ENCODE measurements at regions of chr16 and their contacts with region 1.

Region 1: DNA sequence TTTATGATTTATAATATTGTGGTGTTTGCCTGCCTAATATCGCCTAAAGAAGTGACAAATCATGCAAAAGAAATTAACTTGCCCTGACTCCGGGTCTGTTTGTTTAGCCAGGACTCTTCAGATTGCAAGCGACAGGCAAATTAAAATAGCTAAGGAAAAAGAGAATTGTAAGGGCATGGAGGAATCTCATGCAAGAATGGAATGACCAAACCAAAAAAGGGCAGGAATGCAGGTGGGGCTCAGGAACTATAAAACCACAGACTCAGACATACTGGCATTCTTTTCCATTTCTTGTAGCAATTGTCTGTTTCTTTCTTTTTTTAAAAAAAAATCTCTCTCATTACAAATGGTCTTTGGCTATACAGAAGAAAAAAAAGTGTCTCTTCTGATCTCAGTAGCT is 188.1 kb upstream of the XYLT1 start:
- DNase-seq: no peak
- H3K4me3 ChIP-seq: no peak overlapping the region
- H3K27ac ChIP-seq: no peak overlapping the region
- H3K4me1 ChIP-seq: no peaks in the 10 kb centered on the region
- H3K27me3 ChIP-seq: no peaks in the 10 kb centered on the region
- CTCF ChIP-seq: no peak
- EP300 ChIP-seq: no peak
- POLR2A ChIP-seq: no peak

Region 2: GRCh38 chr16:17718495-17718894 is 59.6 kb after region 1 on chr16:
- intact Hi-C with region 1: loop called in 1 of 4 experiments (anchors 10 kb)
- DNase-seq: no peak
- H3K4me3 ChIP-seq: no peak overlapping the region
- H3K27ac ChIP-seq: no peak overlapping the region
- H3K4me1 ChIP-seq: no peaks in the 10 kb centered on the region
- H3K27me3 ChIP-seq: no peaks in the 10 kb centered on the region
- CTCF ChIP-seq: no peak
- EP300 ChIP-seq: no peak
- POLR2A ChIP-seq: no peak